ENCODE measurements at regions of chr3 and their contacts with region 1.

Region 1: DNA sequence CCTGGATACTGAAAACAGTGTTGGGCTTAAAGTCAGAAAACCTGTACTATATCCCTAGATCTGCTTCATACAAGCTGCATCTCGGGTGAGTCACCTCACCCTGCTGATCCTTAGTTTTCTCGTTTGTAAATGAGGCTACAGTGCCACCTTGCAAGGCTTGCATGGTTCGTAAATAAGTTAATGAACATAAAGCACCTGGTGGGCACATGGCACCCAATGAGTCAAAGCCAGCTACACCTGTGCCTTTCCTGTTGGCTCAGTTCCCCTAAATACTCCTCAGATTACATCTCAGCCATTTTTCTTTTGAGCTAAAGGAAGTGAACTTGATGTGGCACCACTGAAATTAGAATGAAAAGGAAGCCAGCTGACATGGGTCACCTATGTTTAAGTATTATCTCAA is 26.5 kb downstream of the RTP1 start:
- DNase-seq: no peak
- H3K4me3 ChIP-seq: no peak overlapping the region
- H3K4me3 Mint-ChIP-seq: no peak overlapping the region
- H3K27ac Mint-ChIP-seq: no peak overlapping the region
- H3K4me1 ChIP-seq: 0 out of 2 replicates have a peak, but pooled peaks cover 3% of the 10 kb centered on the region
- H3K4me1 Mint-ChIP-seq: no peaks in the 10 kb centered on the region
- H3K27me3 ChIP-seq: no peaks in the 10 kb centered on the region; the same call in 1 of the 2 replicates
- H3K27me3 Mint-ChIP-seq: peaks cover 4% of the 10 kb centered on the region
- CTCF ChIP-seq: no peak

Region 2: GRCh38 chr3:187210545-187211327 is 13.1 kb before region 1 on chr3:
- CTCF ChIA-PET with region 1: interaction called, 10 read pairs
- POLR2A ChIA-PET with region 1: no interaction called
- intact Hi-C with region 1: no loop called
- DNase-seq: peak; percentile 27 to 57
- H3K4me3 ChIP-seq: no peak overlapping the region
- H3K4me3 Mint-ChIP-seq: no peak overlapping the region
- H3K27ac Mint-ChIP-seq: no peak overlapping the region
- H3K4me1 ChIP-seq: peaks cover 22% of the 10 kb centered on the region
- H3K4me1 Mint-ChIP-seq: peaks cover 22% of the 10 kb centered on the region
- H3K27me3 ChIP-seq: no peaks in the 10 kb centered on the region
- H3K27me3 Mint-ChIP-seq: peaks cover 12% of the 10 kb centered on the region
- CTCF ChIP-seq: no peak

Region 3: GRCh38 chr3:187295316-187296034 is 71.7 kb after region 1 on chr3:
- CTCF ChIA-PET with region 1: interaction called, 13 read pairs
- POLR2A ChIA-PET with region 1: no interaction called
- intact Hi-C with region 1: loop called (anchors 1 kb)
- DNase-seq: peak in 1 of 2 experiments; percentile 15
- H3K4me3 ChIP-seq: no peak overlapping the region
- H3K4me3 Mint-ChIP-seq: no peak overlapping the region
- H3K27ac Mint-ChIP-seq: no peak overlapping the region
- H3K4me1 ChIP-seq: peaks cover 4% of the 10 kb centered on the region; the same call in 1 of the 2 replicates
- H3K4me1 Mint-ChIP-seq: no peaks in the 10 kb centered on the region
- H3K27me3 ChIP-seq: no peaks in the 10 kb centered on the region
- H3K27me3 Mint-ChIP-seq: no peaks in the 10 kb centered on the region
- CTCF ChIP-seq: peak in 1 of 2 experiments; percentile 21

Region 4: GRCh38 chr3:187319699-187320302 is 96.0 kb after region 1 on chr3:
- CTCF ChIA-PET with region 1: interaction called, 8 read pairs
- POLR2A ChIA-PET with region 1: no interaction called
- intact Hi-C with region 1: loop called (anchors 1 kb)
- DNase-seq: peak; percentile 66 to 72
- H3K4me3 ChIP-seq: no peak overlapping the region
- H3K4me3 Mint-ChIP-seq: no peak overlapping the region
- H3K27ac Mint-ChIP-seq: no peak overlapping the region
- H3K4me1 ChIP-seq: peaks cover 27% of the 10 kb centered on the region
- H3K4me1 Mint-ChIP-seq: no peaks in the 10 kb centered on the region
- H3K27me3 ChIP-seq: no peaks in the 10 kb centered on the region
- H3K27me3 Mint-ChIP-seq: peaks cover 10% of the 10 kb centered on the region
- CTCF ChIP-seq: peak; percentile 82 to 89

Region 5: GRCh38 chr3:187616307-187616972 is 392.6 kb after region 1 on chr3:
- CTCF ChIA-PET with region 1: no interaction called
- POLR2A ChIA-PET with region 1: no interaction called
- intact Hi-C with region 1: loop called (anchors 1 kb)
- DNase-seq: peak in 1 of 2 experiments; percentile 71
- H3K4me3 ChIP-seq: no peak overlapping the region
- H3K4me3 Mint-ChIP-seq: no peak overlapping the region
- H3K27ac Mint-ChIP-seq: no peak overlapping the region
- H3K4me1 ChIP-seq: no peaks in the 10 kb centered on the region
- H3K4me1 Mint-ChIP-seq: peaks cover 10% of the 10 kb centered on the region
- H3K27me3 ChIP-seq: no peaks in the 10 kb centered on the region
- H3K27me3 Mint-ChIP-seq: no peaks in the 10 kb centered on the region
- CTCF ChIP-seq: peak; percentile 76 to 82

Region 6: GRCh38 chr3:187679638-187680396 is 456.0 kb after region 1 on chr3:
- CTCF ChIA-PET with region 1: interaction called, 36 read pairs
- POLR2A ChIA-PET with region 1: no interaction called
- intact Hi-C with region 1: loop called (anchors 1 kb)
- DNase-seq: peak; percentile 82 to 86
- H3K4me3 ChIP-seq: no peak overlapping the region
- H3K4me3 Mint-ChIP-seq: peak overlapping the region; percentile 33
- H3K27ac Mint-ChIP-seq: no peak overlapping the region
- H3K4me1 ChIP-seq: peaks cover 5% of the 10 kb centered on the region
- H3K4me1 Mint-ChIP-seq: peaks cover 14% of the 10 kb centered on the region
- H3K27me3 ChIP-seq: no peaks in the 10 kb centered on the region
- H3K27me3 Mint-ChIP-seq: peaks cover 9% of the 10 kb centered on the region
- CTCF ChIP-seq: peak; percentile 88 to 91

Region 7: GRCh38 chr3:187714404-187714979 is 490.7 kb after region 1 on chr3:
- CTCF ChIA-PET with region 1: interaction called, 3 read pairs
- POLR2A ChIA-PET with region 1: no interaction called
- intact Hi-C with region 1: loop called (anchors 1 kb)
- DNase-seq: peak; percentile 68 to 80
- H3K4me3 ChIP-seq: no peak overlapping the region
- H3K4me3 Mint-ChIP-seq: no peak overlapping the region
- H3K27ac Mint-ChIP-seq: no peak overlapping the region
- H3K4me1 ChIP-seq: peaks cover 1% of the 10 kb centered on the region; the same call in 1 of the 2 replicates
- H3K4me1 Mint-ChIP-seq: peaks cover 11% of the 10 kb centered on the region
- H3K27me3 ChIP-seq: no peaks in the 10 kb centered on the region
- H3K27me3 Mint-ChIP-seq: no peaks in the 10 kb centered on the region
- CTCF ChIP-seq: peak; percentile 84 to 90